ENCODE measurements at regions of chr9 and their contacts with region 1.

Region 1: GRCh38 chr9:19999491-20000057 is 210.7 kb upstream of the SLC24A2 start:
- DNase-seq: no peak
- H3K4me3 ChIP-seq: no peak overlapping the region
- H3K27ac ChIP-seq: no peak overlapping the region
- H3K4me1 ChIP-seq: no peaks in the 10 kb centered on the region
- H3K27me3 ChIP-seq: no peaks in the 10 kb centered on the region
- CTCF ChIP-seq: no peak
- EP300 ChIP-seq: no peak
- POLR2A ChIP-seq: no peak

Region 2: DNA sequence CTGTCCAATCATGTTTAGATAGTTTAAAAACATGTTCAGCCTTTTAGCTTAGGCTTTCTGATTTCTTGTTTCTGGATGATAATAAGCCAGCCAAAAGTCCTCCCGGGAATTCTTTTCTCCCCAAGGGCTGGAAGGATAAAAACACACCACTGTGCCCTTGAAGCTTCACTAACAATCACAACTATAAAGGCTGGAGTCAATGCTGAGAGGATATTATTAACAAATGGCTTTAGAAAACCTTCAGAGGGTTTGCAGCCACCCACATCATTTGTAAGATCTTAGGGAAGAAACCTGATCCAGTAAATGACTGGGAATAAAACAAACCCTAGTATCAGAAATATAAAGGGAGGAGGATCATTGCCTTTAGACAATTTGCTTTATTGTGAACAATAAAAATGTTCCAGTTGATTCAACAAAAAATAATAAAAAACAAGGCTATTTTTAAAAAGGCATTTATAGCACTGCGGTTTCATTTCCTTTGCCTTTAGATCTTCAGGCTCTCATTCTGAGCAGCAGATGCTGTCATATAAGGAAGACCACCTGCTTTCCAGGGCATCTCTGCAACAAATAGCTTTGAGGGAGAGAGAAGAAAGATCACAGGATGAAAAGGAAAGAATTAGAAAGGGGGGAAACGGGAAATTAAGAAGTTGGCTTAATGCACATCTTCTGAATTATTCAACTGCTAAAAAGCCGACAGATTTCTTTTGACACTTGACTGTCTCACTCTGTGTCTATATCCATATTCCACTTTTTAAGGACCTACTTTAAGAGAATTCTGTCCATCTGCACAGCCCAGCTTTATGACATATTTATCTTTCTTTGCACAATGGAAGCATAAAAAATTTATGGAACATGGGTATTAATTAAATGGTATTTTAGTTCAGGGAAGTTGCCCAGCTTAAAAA is 66.5 kb after region 1 on chr9:
- intact Hi-C with region 1: loop called (anchors 10 kb)
- DNase-seq: no peak
- H3K4me3 ChIP-seq: no peak overlapping the region
- H3K27ac ChIP-seq: no peak overlapping the region
- H3K4me1 ChIP-seq: peaks cover 0 to 7% (median 0%) of the 10 kb centered on the region in 4 donors
- H3K27me3 ChIP-seq: no peaks in the 10 kb centered on the region
- CTCF ChIP-seq: no peak
- EP300 ChIP-seq: no peak
- POLR2A ChIP-seq: no peak